MCF 10A (cell line): ENCODE measurements at regions of chr1 and their contacts with region 1.

Region 1: DNA sequence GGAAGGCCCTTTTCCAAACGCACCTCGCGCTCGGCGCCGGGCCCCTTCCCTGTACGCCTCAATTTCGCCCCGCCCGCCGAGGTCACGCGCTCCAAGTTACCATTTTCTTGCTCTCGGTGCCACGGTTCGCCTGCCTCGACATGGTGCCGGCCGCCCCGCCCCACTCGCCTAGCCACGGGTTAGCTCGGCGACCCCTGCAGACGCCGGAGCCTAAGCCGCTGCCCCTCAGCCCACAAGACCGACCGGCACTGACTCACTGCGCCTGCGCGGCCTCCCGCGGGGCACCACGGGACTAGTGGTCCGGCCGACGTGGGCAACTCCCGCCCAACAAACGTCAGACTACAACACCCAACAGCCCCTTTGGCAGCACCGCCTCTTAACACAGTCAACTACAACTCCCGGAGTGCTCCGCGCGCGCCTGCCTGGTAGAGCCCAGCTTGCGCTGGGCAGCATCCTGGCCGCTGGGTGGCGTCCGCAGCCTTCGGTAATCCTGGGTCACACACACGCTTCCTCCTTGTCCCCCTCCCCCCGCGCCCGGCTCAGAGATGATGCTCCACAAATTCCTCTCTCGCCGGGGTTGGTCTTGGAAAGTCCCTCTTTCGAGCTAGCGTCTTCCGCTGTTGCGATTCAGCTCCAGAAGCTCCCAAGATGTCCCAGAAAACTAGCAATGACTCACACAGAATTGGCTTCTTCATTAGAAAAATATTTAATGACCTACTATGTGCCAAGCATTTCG is at the start of gene TRAPPC3:
- DNase-seq: peak; percentile 100
- H3K4me3 Mint-ChIP-seq: peak within 1 kb of the TSS; percentile 100
- H3K27ac Mint-ChIP-seq: peak within 1 kb of the TSS; percentile 100
- H3K4me1 Mint-ChIP-seq: peaks cover 24% of the 10 kb centered on the region
- H3K27me3 Mint-ChIP-seq: no peaks in the 10 kb centered on the region
- CTCF ChIP-seq: peak; percentile 91
- total RNA-seq, gene TRAPPC3: 72.8 and 75.5 TPM in 2 replicates

Region 2: GRCh38 chr1:36134505-36135329 is 14.7 kb before region 1 on chr1:
- CTCF ChIA-PET with region 1: interaction called, 15 read pairs
- POLR2A ChIA-PET with region 1: interaction called, 9 read pairs
- intact Hi-C with region 1: no loop called
- DNase-seq: peak; percentile 57
- H3K4me3 Mint-ChIP-seq: no peak overlapping the region
- H3K27ac Mint-ChIP-seq: peak overlapping the region; percentile 79
- H3K4me1 Mint-ChIP-seq: peaks cover 21% of the 10 kb centered on the region
- H3K27me3 Mint-ChIP-seq: no peaks in the 10 kb centered on the region
- CTCF ChIP-seq: peak; percentile 42

Region 3: DNA sequence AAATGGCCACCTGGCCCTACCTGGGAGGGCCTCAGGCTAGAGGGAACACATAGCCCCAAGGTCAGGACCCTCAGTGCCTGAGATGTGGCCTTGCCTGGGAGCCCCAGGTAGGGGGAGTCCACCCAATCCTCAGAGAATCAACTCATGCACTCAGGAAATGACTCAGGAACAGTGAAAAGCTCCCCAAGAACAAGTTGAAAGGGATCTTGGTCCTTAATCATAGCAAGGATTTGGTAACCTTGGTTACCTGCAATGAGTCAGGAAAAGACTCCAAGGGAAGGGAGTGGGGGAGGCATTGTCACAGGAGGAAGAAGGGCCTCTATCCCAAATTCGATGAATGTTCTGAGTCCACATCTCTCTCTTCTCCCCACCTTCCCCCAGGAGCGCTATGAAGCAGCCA is 23.6 kb after region 1 on chr1:
- CTCF ChIA-PET with region 1: interaction called, 15 read pairs
- POLR2A ChIA-PET with region 1: interaction called, 3 read pairs
- intact Hi-C with region 1: no loop called
- DNase-seq: peak; percentile 89
- H3K4me3 Mint-ChIP-seq: no peak overlapping the region
- H3K27ac Mint-ChIP-seq: peak overlapping the region; percentile 94
- H3K4me1 Mint-ChIP-seq: peaks cover 26% of the 10 kb centered on the region
- H3K27me3 Mint-ChIP-seq: no peaks in the 10 kb centered on the region
- CTCF ChIP-seq: no peak

Region 4: GRCh38 chr1:36203554-36204346 is 54.3 kb after region 1 on chr1:
- CTCF ChIA-PET with region 1: interaction called, 9 read pairs
- POLR2A ChIA-PET with region 1: interaction called, 11 read pairs
- intact Hi-C with region 1: no loop called
- DNase-seq: peak; percentile 75
- H3K4me3 Mint-ChIP-seq: peak overlapping the region; percentile 52
- H3K27ac Mint-ChIP-seq: peak overlapping the region; percentile 97
- H3K4me1 Mint-ChIP-seq: peaks cover 30% of the 10 kb centered on the region
- H3K27me3 Mint-ChIP-seq: no peaks in the 10 kb centered on the region
- CTCF ChIP-seq: no peak

Region 5: GRCh38 chr1:36285448-36286101 is 136.2 kb after region 1 on chr1:
- CTCF ChIA-PET with region 1: interaction called, 37 read pairs
- POLR2A ChIA-PET with region 1: interaction called, 14 read pairs
- intact Hi-C with region 1: loop called (anchors 1 kb)
- DNase-seq: peak; percentile 89
- H3K4me3 Mint-ChIP-seq: no peak overlapping the region
- H3K27ac Mint-ChIP-seq: no peak overlapping the region
- H3K4me1 Mint-ChIP-seq: peaks cover 7% of the 10 kb centered on the region
- H3K27me3 Mint-ChIP-seq: no peaks in the 10 kb centered on the region
- CTCF ChIP-seq: peak; percentile 67

Region 6: GRCh38 chr1:36369061-36369861 is 219.9 kb after region 1 on chr1:
- CTCF ChIA-PET with region 1: interaction called, 11 read pairs
- POLR2A ChIA-PET with region 1: interaction called, 10 read pairs
- intact Hi-C with region 1: no loop called
- DNase-seq: peak; percentile 76
- H3K4me3 Mint-ChIP-seq: no peak overlapping the region
- H3K27ac Mint-ChIP-seq: peak overlapping the region; percentile 37
- H3K4me1 Mint-ChIP-seq: peaks cover 33% of the 10 kb centered on the region
- H3K27me3 Mint-ChIP-seq: no peaks in the 10 kb centered on the region
- CTCF ChIP-seq: peak; percentile 84

Region 7: GRCh38 chr1:36420836-36421664 is 271.6 kb after region 1 on chr1:
- CTCF ChIA-PET with region 1: interaction called, 7 read pairs
- POLR2A ChIA-PET with region 1: interaction called, 3 read pairs
- intact Hi-C with region 1: loop called (anchors 1 kb)
- DNase-seq: peak; percentile 83
- H3K4me3 Mint-ChIP-seq: no peak overlapping the region
- H3K27ac Mint-ChIP-seq: peak overlapping the region; percentile 76
- H3K4me1 Mint-ChIP-seq: peaks cover 14% of the 10 kb centered on the region
- H3K27me3 Mint-ChIP-seq: no peaks in the 10 kb centered on the region
- CTCF ChIP-seq: peak; percentile 96